Common myeloid progenitor, CD34-positive (primary cell): ENCODE measurements at regions of chr9 and their contacts with region 1.

Region 1: DNA sequence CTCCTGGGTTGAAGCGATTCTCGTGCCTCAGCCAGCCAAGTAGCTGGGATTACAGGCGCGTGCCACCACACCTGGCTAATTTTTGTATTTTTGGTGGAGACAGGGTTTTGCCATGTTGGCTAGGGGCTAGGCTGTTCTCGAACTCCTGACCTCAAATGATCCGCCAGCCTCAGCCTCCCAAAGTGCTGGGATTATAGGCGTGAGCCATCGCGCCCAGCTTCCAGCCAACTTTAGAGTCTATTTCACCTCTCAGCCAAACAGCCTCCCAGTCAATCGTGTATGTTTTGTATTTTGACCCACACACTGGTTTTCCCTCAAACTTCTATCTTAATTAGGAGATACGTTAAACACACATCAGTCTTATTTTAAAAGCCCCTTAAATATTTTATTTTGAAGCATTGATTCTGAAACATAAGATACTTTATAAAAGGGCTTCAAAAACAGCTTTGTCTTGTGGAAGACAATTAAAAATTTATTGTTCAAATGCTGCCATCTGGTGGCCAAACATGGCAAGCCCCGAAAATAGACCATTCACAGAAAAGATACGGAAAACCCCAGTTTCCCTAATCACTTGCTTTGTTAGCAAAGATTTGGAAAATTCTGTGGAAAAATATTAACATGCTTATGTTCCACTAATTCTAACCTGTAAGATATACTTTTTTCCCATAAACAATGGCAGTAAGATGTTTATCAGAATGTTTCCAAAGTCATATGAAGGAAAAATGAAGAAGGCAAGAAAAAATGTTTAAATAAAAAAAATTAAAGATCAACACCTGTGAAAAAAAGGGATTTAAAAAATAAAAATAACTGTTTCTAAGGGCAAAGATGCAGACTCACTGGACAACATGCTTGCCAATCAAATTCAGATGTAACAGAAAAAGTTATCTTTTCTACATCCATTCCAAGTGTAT is 33.1 kb downstream of the APTX start:
- DNase-seq: peak; percentile 38 to 66 (median 48)
- H3K4me3 ChIP-seq: no peak overlapping the region
- H3K27ac ChIP-seq: no peak overlapping the region
- H3K4me1 ChIP-seq: no peaks in the 10 kb centered on the region
- H3K27me3 ChIP-seq: no peaks in the 10 kb centered on the region

Region 2: DNA sequence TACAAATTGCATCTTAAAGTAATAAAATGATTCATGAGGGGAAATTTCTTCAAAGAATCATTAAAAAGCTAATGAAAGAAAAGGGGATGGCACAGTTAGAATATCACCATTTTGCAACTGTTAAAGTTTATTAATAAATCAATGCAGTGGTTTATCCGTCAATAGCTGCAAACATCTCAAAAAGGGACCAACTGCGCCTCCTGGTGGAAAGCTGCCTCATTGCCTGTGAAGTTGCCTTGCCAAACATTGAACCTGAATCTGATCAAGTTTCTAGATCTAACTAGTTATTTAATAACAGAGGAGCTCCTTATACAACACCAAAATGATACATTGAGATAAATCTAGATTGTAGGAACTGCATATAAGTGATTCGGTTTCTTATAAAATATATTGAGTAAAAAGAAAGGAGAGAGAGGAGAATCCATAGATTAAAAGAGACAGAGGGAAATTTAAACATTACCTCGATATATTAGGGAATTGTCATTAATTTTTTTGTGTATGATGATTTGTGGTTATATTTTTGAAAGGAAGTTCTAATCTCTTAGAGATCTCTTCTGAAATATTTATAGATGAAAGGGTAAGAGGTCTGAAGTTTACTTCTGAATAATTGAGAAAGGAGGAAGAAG is 388.5 kb before region 1 on chr9:
- CTCF ChIA-PET with region 1: interaction called, 40 read pairs
- POLR2A ChIA-PET with region 1: no interaction called
- DNase-seq: peak; percentile 69 to 80 (median 72)
- H3K4me3 ChIP-seq: no peak overlapping the region
- H3K27ac ChIP-seq: no peak overlapping the region
- H3K4me1 ChIP-seq: no peaks in the 10 kb centered on the region
- H3K27me3 ChIP-seq: peaks cover 0 to 14% (median 9%) of the 10 kb centered on the region in 5 experiments

Region 3: GRCh38 chr9:32589083-32589723 is 379.2 kb before region 1 on chr9:
- CTCF ChIA-PET with region 1: interaction called, 60 read pairs
- POLR2A ChIA-PET with region 1: no interaction called
- DNase-seq: peak; percentile 30 to 66 (median 63)
- H3K4me3 ChIP-seq: no peak overlapping the region
- H3K27ac ChIP-seq: no peak overlapping the region
- H3K4me1 ChIP-seq: no peaks in the 10 kb centered on the region
- H3K27me3 ChIP-seq: peaks cover 0 to 26% (median 5%) of the 10 kb centered on the region in 5 experiments

Region 4: GRCh38 chr9:33049680-33050361 is 81.5 kb after region 1 on chr9:
- CTCF ChIA-PET with region 1: no interaction called
- POLR2A ChIA-PET with region 1: no interaction called
- DNase-seq: no peak
- H3K4me3 ChIP-seq: no peak overlapping the region
- H3K27ac ChIP-seq: no peak overlapping the region
- H3K4me1 ChIP-seq: peaks cover 0 to 1% (median under 1%) of the 10 kb centered on the region in 4 experiments
- H3K27me3 ChIP-seq: no peaks in the 10 kb centered on the region